CD8-positive, alpha-beta T cell (primary cell): ENCODE measurements at regions of chr15 and their contacts with region 1.

Region 1: DNA sequence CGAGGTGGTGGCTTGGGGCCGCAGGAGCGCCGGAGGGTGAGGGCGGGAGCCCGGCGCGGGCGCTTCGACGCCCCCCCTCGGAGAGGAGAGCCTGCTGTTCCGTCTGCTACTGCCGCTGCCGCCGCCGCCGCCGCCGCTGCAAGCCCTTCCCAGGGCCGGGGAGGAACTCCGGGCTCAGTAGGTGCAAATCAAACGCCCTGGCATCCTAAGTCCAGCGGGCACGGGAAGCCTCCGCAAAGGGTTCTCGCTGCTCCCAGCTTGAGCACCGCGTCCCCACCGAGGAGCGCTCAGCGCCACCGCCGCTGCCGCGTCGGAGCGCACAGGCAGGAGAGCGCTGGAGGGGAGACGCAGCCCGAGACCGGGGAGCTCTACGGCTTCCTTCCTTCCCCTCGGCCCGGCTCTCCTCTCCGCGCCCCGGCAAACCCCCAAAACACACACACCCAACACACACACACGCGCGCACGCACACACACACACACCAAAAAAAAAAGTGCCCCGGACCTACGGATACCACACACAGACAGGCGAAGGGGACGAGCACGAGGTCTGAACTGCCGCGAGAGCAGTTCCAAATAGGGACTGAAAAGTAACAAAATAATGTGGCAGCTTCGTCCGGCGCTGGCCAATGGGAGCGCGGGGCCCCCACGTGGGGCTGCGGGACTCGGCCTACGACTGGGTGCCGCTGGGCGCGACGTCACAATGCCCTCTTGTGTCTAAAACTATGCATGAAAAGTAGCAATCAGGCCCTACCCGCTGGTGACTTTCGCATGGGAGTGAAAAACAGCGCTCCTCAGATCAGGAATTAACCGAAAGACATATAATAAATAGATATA is at the start of gene TLE3:
- DNase-seq: peak; percentile 93 to 99 (median 98)
- ATAC-seq: peak; percentile 55
- H3K4me3 ChIP-seq: peak within 1 kb of the TSS; percentile 81 to 89
- H3K4me3 Mint-ChIP-seq: peak within 1 kb of the TSS; percentile 99
- H3K27ac ChIP-seq: peak within 1 kb of the TSS; percentile 90
- H3K27ac Mint-ChIP-seq: peak within 1 kb of the TSS; percentile 98
- H3K4me1 ChIP-seq: peaks cover 51% of the 10 kb centered on the region
- H3K4me1 Mint-ChIP-seq: peaks cover 53% of the 10 kb centered on the region
- H3K27me3 ChIP-seq: peaks cover 0 to 6% of the 10 kb centered on the region in 2 experiments
- H3K27me3 Mint-ChIP-seq: no peaks in the 10 kb centered on the region
- CTCF ChIP-seq: peak; percentile 35
- total RNA-seq, gene TLE3: 198 to 201 TPM

Region 2: GRCh38 chr15:68820295-68821189 is 1277.0 kb before region 1 on chr15 and contains the start of gene ANP32A:
- CTCF ChIA-PET with region 1: no interaction called
- POLR2A ChIA-PET with region 1: no interaction called
- intact Hi-C with region 1: loop called in 1 of 2 experiments (anchors 5 kb)
- DNase-seq: peak; percentile 96 to 99 (median 97)
- ATAC-seq: peak; percentile 62
- H3K4me3 ChIP-seq: peak within 1 kb of the TSS; percentile 81 to 98
- H3K4me3 Mint-ChIP-seq: peak within 1 kb of the TSS; percentile 95
- H3K27ac ChIP-seq: peak within 1 kb of the TSS; percentile 59 to 74
- H3K27ac Mint-ChIP-seq: peak within 1 kb of the TSS; percentile 97
- H3K4me1 ChIP-seq: peaks cover 28% of the 10 kb centered on the region
- H3K4me1 Mint-ChIP-seq: peaks cover 31% of the 10 kb centered on the region
- H3K27me3 ChIP-seq: no peaks in the 10 kb centered on the region
- H3K27me3 Mint-ChIP-seq: no peaks in the 10 kb centered on the region
- CTCF ChIP-seq: no peak
- total RNA-seq, gene ANP32A: 47.6 to 51.9 TPM

Region 3: DNA sequence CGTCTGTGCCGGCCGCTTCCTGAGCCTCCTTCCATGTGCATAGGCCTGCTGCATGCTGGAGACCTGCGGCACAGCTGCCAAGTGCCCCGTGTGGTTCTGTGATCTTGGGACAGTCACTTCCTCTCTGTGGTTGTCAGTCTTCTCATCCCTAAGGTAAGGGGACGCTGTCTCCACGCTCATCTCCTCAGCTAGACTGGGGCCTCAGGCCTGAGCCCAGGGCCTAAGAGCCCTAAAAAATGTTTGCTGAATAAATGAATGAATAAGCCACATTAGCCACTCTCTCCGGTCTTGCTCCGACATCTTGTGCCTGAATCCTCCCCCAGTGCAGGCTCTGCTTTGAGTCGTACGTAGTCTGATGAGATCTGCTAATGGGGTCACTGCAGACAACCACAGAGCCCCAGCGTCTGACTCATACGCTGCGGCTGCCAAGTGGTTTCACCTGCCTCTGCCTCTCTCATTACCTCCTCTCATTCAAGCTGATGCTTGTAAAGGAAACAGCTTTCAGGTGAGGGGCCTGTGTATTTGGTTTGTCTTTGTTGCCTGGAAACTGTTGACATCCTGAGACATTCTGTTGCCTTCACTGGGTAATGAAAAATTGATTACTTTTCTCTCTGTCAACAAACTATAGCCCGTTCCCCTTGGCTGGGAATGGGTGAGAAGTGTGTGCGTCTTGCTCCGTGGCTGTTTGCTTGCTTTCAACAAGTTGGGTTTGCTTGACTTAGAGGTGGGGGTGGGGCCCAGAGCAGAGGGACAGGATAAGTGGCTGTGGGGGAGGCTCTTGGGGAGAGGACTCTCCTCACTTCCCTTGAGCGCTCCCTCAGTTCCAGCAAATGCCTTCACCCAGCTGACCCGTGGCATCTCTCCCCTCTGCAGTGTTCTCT is 629.1 kb before region 1 on chr15:
- CTCF ChIA-PET with region 1: interaction called, 4 read pairs
- POLR2A ChIA-PET with region 1: interaction called, 8 read pairs
- intact Hi-C with region 1: loop called (anchors 1 kb)
- DNase-seq: peak; percentile 72 to 97 (median 84)
- ATAC-seq: peak; percentile 88
- H3K4me3 ChIP-seq: peak overlapping the region in 1 of 2 experiments; percentile 14
- H3K4me3 Mint-ChIP-seq: peak overlapping the region; percentile 60
- H3K27ac ChIP-seq: peak overlapping the region; percentile 76 to 80
- H3K27ac Mint-ChIP-seq: peak overlapping the region; percentile 98
- H3K4me1 ChIP-seq: peaks cover 27% of the 10 kb centered on the region
- H3K4me1 Mint-ChIP-seq: peaks cover 23% of the 10 kb centered on the region
- H3K27me3 ChIP-seq: no peaks in the 10 kb centered on the region
- H3K27me3 Mint-ChIP-seq: no peaks in the 10 kb centered on the region
- CTCF ChIP-seq: no peak

Region 4: DNA sequence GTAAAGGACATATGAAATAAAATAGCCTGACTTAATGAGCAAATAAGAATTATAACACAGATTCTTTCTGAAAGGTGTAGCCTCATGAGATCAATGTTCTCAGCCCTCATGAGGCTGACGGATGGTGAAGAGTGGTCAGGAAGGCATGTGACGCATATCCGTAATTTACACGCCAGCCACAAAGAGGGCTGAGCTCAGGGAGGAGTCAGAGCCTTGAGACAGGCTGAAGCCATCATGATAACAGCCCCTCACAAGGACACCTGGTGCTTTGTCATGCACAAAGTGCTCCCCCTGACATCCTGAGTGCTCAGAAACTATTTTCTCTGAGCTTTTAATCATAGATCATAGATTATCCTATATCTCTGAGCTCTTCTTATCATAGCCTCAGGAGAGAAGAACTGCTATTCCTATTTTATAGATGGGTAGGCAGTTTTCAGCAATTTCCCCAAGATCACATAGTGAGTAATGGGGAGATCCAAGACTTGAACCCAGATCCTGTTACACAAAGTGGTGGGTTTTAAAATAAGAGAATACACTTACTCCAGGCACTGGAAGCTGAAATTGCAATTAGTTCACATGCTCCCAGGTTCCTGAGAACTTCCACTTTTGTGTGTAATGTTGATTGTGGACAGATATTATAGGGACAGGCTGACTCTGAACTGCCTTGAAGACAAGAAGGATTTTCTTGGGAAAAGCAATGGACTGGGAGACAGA is 377.9 kb before region 1 on chr15:
- CTCF ChIA-PET with region 1: interaction called, 9 read pairs
- POLR2A ChIA-PET with region 1: interaction called, 39 read pairs
- intact Hi-C with region 1: loop called (anchors 1 to 2 kb)
- DNase-seq: peak; percentile 50 to 94 (median 72)
- ATAC-seq: peak; percentile 82
- H3K4me3 ChIP-seq: no peak overlapping the region
- H3K4me3 Mint-ChIP-seq: peak overlapping the region; percentile 36
- H3K27ac ChIP-seq: peak overlapping the region; percentile 50 to 78
- H3K27ac Mint-ChIP-seq: peak overlapping the region; percentile 87
- H3K4me1 ChIP-seq: peaks cover 75% of the 10 kb centered on the region
- H3K4me1 Mint-ChIP-seq: peaks cover 91% of the 10 kb centered on the region
- H3K27me3 ChIP-seq: no peaks in the 10 kb centered on the region
- H3K27me3 Mint-ChIP-seq: no peaks in the 10 kb centered on the region
- CTCF ChIP-seq: no peak

Region 5: DNA sequence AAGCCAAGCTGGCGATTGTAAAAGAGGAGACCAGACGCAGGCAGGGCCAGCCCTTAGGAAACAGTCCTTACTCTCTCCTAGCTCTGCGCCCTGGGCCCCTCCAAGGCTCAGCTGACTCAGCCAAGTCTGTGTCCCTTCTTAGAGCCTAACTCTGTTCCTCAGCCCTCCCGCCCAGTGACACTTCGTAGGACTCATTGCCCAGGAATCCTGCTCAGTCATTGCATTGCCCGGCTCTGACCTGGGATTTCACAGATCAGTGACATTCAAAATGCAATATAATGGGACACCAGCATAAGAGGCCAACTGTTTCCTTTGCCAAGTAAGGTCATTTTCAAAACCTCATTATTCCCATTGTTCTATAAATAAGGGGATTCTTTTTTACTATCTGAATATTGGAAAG is 244.0 kb before region 1 on chr15:
- CTCF ChIA-PET with region 1: no interaction called
- POLR2A ChIA-PET with region 1: no interaction called
- intact Hi-C with region 1: loop called in 1 of 2 experiments (anchors 10 kb)
- DNase-seq: no peak
- ATAC-seq: no peak
- H3K4me3 ChIP-seq: no peak overlapping the region
- H3K4me3 Mint-ChIP-seq: no peak overlapping the region
- H3K27ac ChIP-seq: no peak overlapping the region
- H3K27ac Mint-ChIP-seq: no peak overlapping the region
- H3K4me1 ChIP-seq: peaks cover 19% of the 10 kb centered on the region
- H3K4me1 Mint-ChIP-seq: peaks cover 17% of the 10 kb centered on the region
- H3K27me3 ChIP-seq: no peaks in the 10 kb centered on the region
- H3K27me3 Mint-ChIP-seq: no peaks in the 10 kb centered on the region
- CTCF ChIP-seq: no peak

Region 6: DNA sequence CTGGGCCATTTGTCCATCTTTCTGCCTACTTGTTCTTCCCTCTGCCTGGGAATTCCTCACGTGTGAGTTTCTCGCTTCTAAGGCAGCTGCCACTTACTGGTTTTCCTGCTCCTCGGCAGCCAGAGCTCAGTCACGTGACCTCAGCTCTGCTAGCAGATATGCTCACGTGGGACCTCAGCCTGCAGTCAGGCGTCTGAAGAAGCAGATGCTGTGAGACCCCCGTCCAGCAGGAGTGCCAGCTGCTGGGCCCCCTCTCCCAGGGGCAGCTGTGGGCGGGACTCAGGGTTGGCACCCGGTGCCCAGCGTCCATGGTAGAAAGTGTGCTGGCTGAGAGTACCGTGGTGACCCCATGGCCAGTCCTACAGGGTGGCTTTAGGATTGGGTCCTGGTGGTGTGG is 161.5 kb after region 1 on chr15:
- CTCF ChIA-PET with region 1: no interaction called
- POLR2A ChIA-PET with region 1: interaction called, 7 read pairs
- intact Hi-C with region 1: loop called in 1 of 2 experiments (anchors 2 kb)
- DNase-seq: peak; percentile 14 to 86 (median 59)
- ATAC-seq: peak; percentile 47
- H3K4me3 ChIP-seq: peak overlapping the region; percentile 31 to 37
- H3K4me3 Mint-ChIP-seq: peak overlapping the region; percentile 76
- H3K27ac ChIP-seq: peak overlapping the region; percentile 40 to 61
- H3K27ac Mint-ChIP-seq: peak overlapping the region; percentile 96
- H3K4me1 ChIP-seq: peaks cover 43% of the 10 kb centered on the region
- H3K4me1 Mint-ChIP-seq: peaks cover 52% of the 10 kb centered on the region
- H3K27me3 ChIP-seq: no peaks in the 10 kb centered on the region
- H3K27me3 Mint-ChIP-seq: no peaks in the 10 kb centered on the region
- CTCF ChIP-seq: no peak